Activated CD4-positive, alpha-beta memory T cell treated with anti-CD3 and anti-CD28 coated beads, Interleukin-2, amount 10 ng/mL, durations not matched to agents 7 days and 5 days (primary cell): ENCODE measurements at regions of chr13 and their contacts with region 1.

Region 1: GRCh38 chr13:52968074-52968700 is 60.4 kb upstream of the OLFM4 start:
- DNase-seq: peak; percentile 65
- H3K4me3 Mint-ChIP-seq: no peak overlapping the region
- H3K27ac Mint-ChIP-seq: no peak overlapping the region
- H3K4me1 Mint-ChIP-seq: no peaks in the 10 kb centered on the region
- H3K27me3 Mint-ChIP-seq: peaks cover 6% of the 10 kb centered on the region

Region 2: DNA sequence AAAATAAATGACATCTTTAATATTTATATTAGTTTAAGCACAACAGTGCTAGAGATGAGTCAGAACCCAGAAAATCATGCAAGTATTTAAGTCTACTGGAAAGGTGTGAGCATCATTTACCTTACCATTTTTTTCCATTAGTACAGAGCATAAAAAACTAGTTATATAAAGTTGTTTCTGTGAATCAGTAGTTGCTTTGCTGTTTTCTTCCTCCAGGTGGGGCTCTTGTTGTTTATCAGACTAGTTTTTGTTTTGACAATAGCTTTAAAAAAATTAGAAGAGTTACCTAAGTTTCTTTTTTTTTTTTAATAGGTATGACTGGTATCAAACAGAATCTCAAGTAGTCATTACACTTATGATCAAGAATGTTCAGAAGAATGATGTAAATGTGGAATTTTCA is 302.9 kb before region 1 on chr13:
- CTCF ChIA-PET with region 1: interaction called, 13 read pairs
- POLR2A ChIA-PET with region 1: no interaction called
- DNase-seq: no peak
- H3K4me3 Mint-ChIP-seq: no peak overlapping the region
- H3K27ac Mint-ChIP-seq: no peak overlapping the region
- H3K4me1 Mint-ChIP-seq: peaks cover 1% of the 10 kb centered on the region
- H3K27me3 Mint-ChIP-seq: no peaks in the 10 kb centered on the region

Region 3: DNA sequence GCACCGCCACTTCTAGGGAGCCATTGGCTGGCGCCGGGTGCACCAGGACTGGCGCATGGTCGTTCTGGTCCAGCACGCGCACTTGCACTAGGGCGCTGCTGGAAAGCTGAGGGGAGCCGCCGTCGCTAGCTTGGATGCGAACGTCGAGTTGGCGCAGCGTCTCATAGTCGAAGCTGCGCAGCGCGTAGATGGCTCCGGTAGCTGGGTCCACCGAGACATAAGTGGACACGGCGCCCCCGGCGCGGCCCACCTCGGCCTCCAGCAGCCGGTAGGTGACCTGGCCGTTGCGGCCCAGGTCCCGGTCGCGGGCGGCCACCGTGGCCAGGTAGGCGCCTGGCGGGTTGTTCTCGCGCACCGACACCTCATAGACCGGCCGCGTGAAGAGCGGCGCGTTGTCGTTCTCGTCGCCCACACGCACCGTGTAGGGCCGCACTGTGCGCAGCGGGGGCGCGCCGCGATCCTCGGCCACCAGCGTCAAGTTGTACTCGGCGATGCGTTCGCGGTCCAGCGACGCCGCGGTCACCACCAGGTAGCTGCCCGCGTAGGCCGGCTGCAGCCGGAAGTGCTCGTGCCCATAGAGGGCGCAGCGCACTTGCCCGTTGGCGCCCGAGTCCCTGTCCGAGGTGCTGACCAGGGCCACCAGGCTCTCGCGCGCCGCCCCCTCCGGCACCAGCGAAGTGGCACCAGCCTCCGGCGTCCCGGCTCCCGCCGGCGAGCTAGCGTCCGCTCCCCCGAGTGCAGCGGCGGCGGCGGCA is 121.4 kb before region 1 on chr13:
- CTCF ChIA-PET with region 1: interaction called, 12 read pairs
- POLR2A ChIA-PET with region 1: no interaction called
- DNase-seq: peak; percentile 42
- H3K4me3 Mint-ChIP-seq: no peak overlapping the region
- H3K27ac Mint-ChIP-seq: no peak overlapping the region
- H3K4me1 Mint-ChIP-seq: peaks cover 21% of the 10 kb centered on the region
- H3K27me3 Mint-ChIP-seq: peaks cover 63% of the 10 kb centered on the region

Region 4: DNA sequence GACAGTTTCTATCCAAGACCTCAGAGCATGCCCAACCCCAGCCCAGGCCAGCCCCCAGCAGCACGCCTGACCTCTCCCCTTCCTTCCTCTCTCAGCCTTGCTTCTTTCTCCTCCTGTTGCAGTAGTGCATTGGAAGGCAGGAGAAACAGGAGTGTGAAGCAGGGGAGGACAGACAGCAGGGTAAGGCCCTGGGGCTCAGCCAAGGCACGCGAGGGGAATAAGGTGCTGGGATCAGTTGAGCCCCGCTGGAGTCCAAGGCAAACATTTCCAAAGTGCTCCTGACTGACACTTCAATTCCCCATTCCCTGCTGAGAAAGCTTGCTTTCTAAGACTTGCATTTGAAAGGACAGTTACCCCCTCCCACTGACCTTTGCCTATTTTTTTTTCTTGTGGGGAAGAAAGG is 12.7 kb before region 1 on chr13:
- CTCF ChIA-PET with region 1: interaction called, 17 read pairs
- POLR2A ChIA-PET with region 1: no interaction called
- DNase-seq: no peak
- H3K4me3 Mint-ChIP-seq: no peak overlapping the region
- H3K27ac Mint-ChIP-seq: no peak overlapping the region
- H3K4me1 Mint-ChIP-seq: no peaks in the 10 kb centered on the region
- H3K27me3 Mint-ChIP-seq: no peaks in the 10 kb centered on the region

Region 5: GRCh38 chr13:52980695-52981094 is 12.5 kb after region 1 on chr13:
- CTCF ChIA-PET with region 1: interaction called, 14 read pairs
- POLR2A ChIA-PET with region 1: no interaction called
- DNase-seq: no peak
- H3K4me3 Mint-ChIP-seq: no peak overlapping the region
- H3K27ac Mint-ChIP-seq: no peak overlapping the region
- H3K4me1 Mint-ChIP-seq: no peaks in the 10 kb centered on the region
- H3K27me3 Mint-ChIP-seq: no peaks in the 10 kb centered on the region

Region 6: GRCh38 chr13:53151336-53152056 is 183.3 kb after region 1 on chr13:
- CTCF ChIA-PET with region 1: interaction called, 12 read pairs
- POLR2A ChIA-PET with region 1: no interaction called
- DNase-seq: peak; percentile 32
- H3K4me3 Mint-ChIP-seq: no peak overlapping the region
- H3K27ac Mint-ChIP-seq: no peak overlapping the region
- H3K4me1 Mint-ChIP-seq: peaks cover 2% of the 10 kb centered on the region
- H3K27me3 Mint-ChIP-seq: peaks cover 1% of the 10 kb centered on the region